ENCODE measurements at regions of chr1 and their contacts with region 1.

Region 1: GRCh38 chr1:222643938-222644635 is 26.2 kb downstream of the MIA3 start:
- DNase-seq: peak; percentile 96 to 99 (median 97)
- H3K4me3 ChIP-seq: peak overlapping the region; percentile 94 to 100
- H3K4me3 Mint-ChIP-seq: peak overlapping the region; percentile 90 to 100 (median 100)
- H3K27ac ChIP-seq: peak overlapping the region; percentile 98
- H3K27ac Mint-ChIP-seq: peak overlapping the region; percentile 97 to 100 (median 99)
- H3K4me1 ChIP-seq: peaks cover 32% of the 10 kb centered on the region
- H3K4me1 Mint-ChIP-seq: peaks cover 16 to 36% (median 28%) of the 10 kb centered on the region in 4 donors
- H3K27me3 ChIP-seq: no peaks in the 10 kb centered on the region
- H3K27me3 Mint-ChIP-seq: no peaks in the 10 kb centered on the region

Region 2: GRCh38 chr1:221435504-221435904 is 1208.6 kb before region 1 on chr1:
- CTCF ChIA-PET with region 1: no interaction called
- POLR2A ChIA-PET with region 1: no interaction called
- intact Hi-C with region 1: loop called (anchors 5 kb)
- DNase-seq: peak in 4 of 5 donors; percentile 34 to 45 (median 36)
- H3K4me3 ChIP-seq: no peak overlapping the region
- H3K4me3 Mint-ChIP-seq: peak overlapping the region in 1 of 8 donors; percentile 22
- H3K27ac ChIP-seq: no peak overlapping the region
- H3K27ac Mint-ChIP-seq: no peak overlapping the region
- H3K4me1 ChIP-seq: peaks cover 16% of the 10 kb centered on the region
- H3K4me1 Mint-ChIP-seq: peaks cover 13 to 29% (median 19%) of the 10 kb centered on the region in 4 donors
- H3K27me3 ChIP-seq: no peaks in the 10 kb centered on the region
- H3K27me3 Mint-ChIP-seq: peaks cover 0 to 4% of the 10 kb centered on the region in 2 donors

Region 3: GRCh38 chr1:222589462-222590302 is 54.4 kb before region 1 on chr1 and contains the start of gene TAF1A:
- CTCF ChIA-PET with region 1: interaction called, 4 read pairs
- POLR2A ChIA-PET with region 1: interaction called, 27 read pairs
- intact Hi-C with region 1: loop called (anchors 1 kb)
- DNase-seq: peak; percentile 85 to 94 (median 88)
- H3K4me3 ChIP-seq: peak within 1 kb of the TSS; percentile 78 to 85
- H3K4me3 Mint-ChIP-seq: peak within 1 kb of the TSS; percentile 95 to 99 (median 98)
- H3K27ac ChIP-seq: peak within 1 kb of the TSS; percentile 76
- H3K27ac Mint-ChIP-seq: peak within 1 kb of the TSS; percentile 92 to 100 (median 99)
- H3K4me1 ChIP-seq: peaks cover 27% of the 10 kb centered on the region
- H3K4me1 Mint-ChIP-seq: peaks cover 32 to 52% (median 43%) of the 10 kb centered on the region in 4 donors
- H3K27me3 ChIP-seq: no peaks in the 10 kb centered on the region
- H3K27me3 Mint-ChIP-seq: no peaks in the 10 kb centered on the region
- total RNA-seq, gene TAF1A: 16.4 to 17.8 TPM

Region 4: DNA sequence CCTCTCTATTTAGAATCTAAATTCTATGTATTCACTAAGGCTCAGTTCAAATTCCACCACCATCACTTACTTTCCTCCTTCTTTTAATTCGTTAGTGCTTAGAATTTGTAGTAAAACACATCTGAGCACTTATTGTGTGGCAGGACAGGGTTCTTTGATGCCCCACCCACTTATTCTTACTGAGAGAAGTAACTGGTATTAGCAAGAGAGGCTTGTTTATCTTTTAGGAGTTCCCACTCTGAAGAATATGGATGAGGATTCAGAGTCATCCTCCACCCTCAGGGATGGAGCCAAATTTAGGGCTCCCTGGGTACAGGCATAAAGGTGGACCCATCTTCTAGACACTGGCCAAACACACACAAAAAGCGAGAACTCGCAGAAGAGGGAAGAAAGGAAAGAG is 42.8 kb before region 1 on chr1:
- CTCF ChIA-PET with region 1: no interaction called
- POLR2A ChIA-PET with region 1: no interaction called
- intact Hi-C with region 1: no loop called
- DNase-seq: no peak
- H3K4me3 ChIP-seq: no peak overlapping the region
- H3K4me3 Mint-ChIP-seq: no peak overlapping the region
- H3K27ac ChIP-seq: no peak overlapping the region
- H3K27ac Mint-ChIP-seq: no peak overlapping the region
- H3K4me1 ChIP-seq: no peaks in the 10 kb centered on the region
- H3K4me1 Mint-ChIP-seq: no peaks in the 10 kb centered on the region
- H3K27me3 ChIP-seq: no peaks in the 10 kb centered on the region
- H3K27me3 Mint-ChIP-seq: peaks cover 4 to 7% of the 10 kb centered on the region in 2 donors

Region 5: GRCh38 chr1:222617367-222617951 is 26.6 kb before region 1 on chr1:
- CTCF ChIA-PET with region 1: no interaction called
- POLR2A ChIA-PET with region 1: interaction called, 22 read pairs
- intact Hi-C with region 1: loop called (anchors 1 kb)
- DNase-seq: peak; percentile 89 to 99 (median 92)
- H3K4me3 ChIP-seq: peak overlapping the region; percentile 25 to 74
- H3K4me3 Mint-ChIP-seq: peak overlapping the region; percentile 89 to 97 (median 94)
- H3K27ac ChIP-seq: peak overlapping the region; percentile 68
- H3K27ac Mint-ChIP-seq: peak overlapping the region; percentile 90 to 98 (median 97)
- H3K4me1 ChIP-seq: peaks cover 22% of the 10 kb centered on the region
- H3K4me1 Mint-ChIP-seq: peaks cover 19 to 37% (median 28%) of the 10 kb centered on the region in 4 donors
- H3K27me3 ChIP-seq: no peaks in the 10 kb centered on the region
- H3K27me3 Mint-ChIP-seq: peaks cover 15 to 24% of the 10 kb centered on the region in 2 donors

Region 6: DNA sequence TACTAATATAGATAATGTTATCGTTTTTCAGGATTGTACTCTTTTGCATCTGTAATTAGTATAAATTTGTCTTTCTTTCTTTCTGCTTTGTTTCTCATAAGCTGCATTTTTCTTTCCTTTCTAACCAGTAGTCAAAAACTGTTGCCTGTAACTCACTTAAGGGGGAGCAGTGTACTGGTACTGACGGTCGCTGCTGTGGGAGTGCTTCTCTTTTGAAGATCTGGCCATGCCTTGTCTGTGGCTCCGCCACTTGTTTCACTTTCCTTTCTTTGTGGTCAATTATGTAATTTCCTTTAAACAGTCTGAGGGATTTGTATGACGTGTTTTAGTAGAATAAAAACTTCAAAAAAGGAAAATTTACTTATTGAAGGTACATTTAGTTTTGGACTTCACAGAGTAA is 10.8 kb after region 1 on chr1:
- CTCF ChIA-PET with region 1: interaction called, 14 read pairs
- POLR2A ChIA-PET with region 1: interaction called, 45 read pairs
- intact Hi-C with region 1: loop called (anchors 1 kb)
- DNase-seq: peak; percentile 80 to 92 (median 87)
- H3K4me3 ChIP-seq: no peak overlapping the region
- H3K4me3 Mint-ChIP-seq: peak overlapping the region; percentile 37 to 76 (median 60)
- H3K27ac ChIP-seq: peak overlapping the region; percentile 67
- H3K27ac Mint-ChIP-seq: peak overlapping the region; percentile 90 to 98 (median 95)
- H3K4me1 ChIP-seq: peaks cover 32% of the 10 kb centered on the region
- H3K4me1 Mint-ChIP-seq: peaks cover 33 to 55% (median 46%) of the 10 kb centered on the region in 4 donors
- H3K27me3 ChIP-seq: no peaks in the 10 kb centered on the region
- H3K27me3 Mint-ChIP-seq: no peaks in the 10 kb centered on the region

Measured in CD4-positive, alpha-beta memory T cell (primary cell).